GM13977 (cell line): ENCODE measurements at regions of chr1 and their contacts with region 1.

Region 1: DNA sequence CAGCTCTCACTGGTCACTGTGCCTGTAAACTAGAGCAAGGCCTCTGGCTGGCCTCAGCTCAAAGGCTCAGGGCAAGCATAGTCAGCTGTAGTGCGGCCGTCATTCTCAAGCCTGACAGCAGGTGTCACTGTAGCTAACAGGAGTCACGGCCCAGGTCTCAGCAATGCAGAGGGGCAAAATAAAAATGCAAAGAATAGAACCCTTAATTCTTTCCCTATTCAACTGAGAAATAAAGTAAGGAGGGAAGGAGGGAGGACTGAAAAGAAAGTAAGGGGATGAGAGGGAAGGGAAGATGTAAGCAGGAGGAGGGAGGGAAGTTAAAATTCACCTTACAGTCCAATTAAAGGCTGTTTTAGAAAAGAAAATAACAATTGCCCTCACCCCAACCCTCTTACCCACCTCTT is 106.1 kb downstream of the KIAA0319L start:
- DNase-seq: peak; percentile 58
- CTCF ChIP-seq: peak; percentile 89

Region 2: DNA sequence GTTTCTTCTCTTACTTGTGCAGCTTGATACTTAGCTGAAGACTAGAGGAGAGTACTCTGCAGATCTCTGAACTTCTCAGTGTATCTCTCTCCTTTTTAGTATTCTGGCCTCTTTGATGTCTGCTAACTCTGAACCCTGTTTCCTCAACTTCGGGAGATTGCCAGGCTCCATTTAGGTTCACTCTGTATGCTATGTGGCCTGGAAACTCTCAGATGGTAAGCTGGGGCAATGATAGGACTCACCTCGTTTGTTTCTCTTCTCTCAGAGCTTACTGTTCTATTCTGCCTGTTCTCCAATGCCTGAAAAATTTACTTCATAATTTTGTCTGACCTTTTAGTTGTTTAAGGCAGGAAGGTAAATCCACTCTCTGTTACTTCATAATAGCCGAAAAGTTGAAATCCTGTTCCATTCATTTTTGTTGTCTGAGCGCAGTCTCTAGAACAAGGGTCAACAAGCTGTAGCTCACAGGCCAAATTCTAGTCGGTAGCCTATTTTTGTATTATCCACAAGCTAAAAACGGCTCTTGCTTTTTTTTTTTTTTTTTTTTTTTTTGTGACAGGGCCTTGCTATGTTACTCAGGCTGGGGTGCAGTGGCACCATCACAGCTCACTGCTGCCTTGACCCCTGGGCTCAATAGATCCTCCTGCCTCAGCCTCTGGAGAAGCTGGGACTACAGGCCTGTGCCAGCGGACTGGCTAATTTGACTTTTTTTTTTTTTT is 149.3 kb before region 1 on chr1:
- in situ Hi-C with region 1: no loop called
- DNase-seq: no peak
- CTCF ChIP-seq: no peak

Region 3: GRCh38 chr1:35564037-35564883 is 113.1 kb after region 1 on chr1:
- in situ Hi-C with region 1: loop called (anchors 5 kb)
- DNase-seq: peak; percentile 91
- CTCF ChIP-seq: peak; percentile 88

Region 4: GRCh38 chr1:35726450-35727433 is 275.6 kb after region 1 on chr1:
- in situ Hi-C with region 1: loop called (anchors 10 kb)
- DNase-seq: peak; percentile 57
- CTCF ChIP-seq: peak; percentile 83